AG04449 (cell line): ENCODE measurements at regions of chr18 and their contacts with region 1.

Region 1: GRCh38 chr18:24138789-24139616 is at the start of gene CABYR:
- DNase-seq: peak; percentile 57
- H3K4me3 ChIP-seq: peak within 1 kb of the TSS; percentile 67
- CTCF ChIP-seq: no peak

Region 2: GRCh38 chr18:24111936-24112335 is 27.1 kb before region 1 on chr18:
- CTCF ChIA-PET with region 1: no interaction called
- POLR2A ChIA-PET with region 1: no interaction called
- DNase-seq: no peak
- H3K4me3 ChIP-seq: no peak overlapping the region
- CTCF ChIP-seq: no peak

Region 3: GRCh38 chr18:24157855-24158254 is 18.9 kb after region 1 on chr18:
- CTCF ChIA-PET with region 1: interaction called, 5 read pairs
- POLR2A ChIA-PET with region 1: interaction called, 16 read pairs
- DNase-seq: no peak
- H3K4me3 ChIP-seq: no peak overlapping the region
- CTCF ChIP-seq: no peak

Region 4: GRCh38 chr18:24271381-24272331 is 132.7 kb after region 1 on chr18:
- CTCF ChIA-PET with region 1: interaction called, 3 read pairs
- POLR2A ChIA-PET with region 1: interaction called, 12 read pairs
- DNase-seq: no peak
- H3K4me3 ChIP-seq: peak overlapping the region; percentile 81
- CTCF ChIP-seq: peak; percentile 26